ENCODE measurements at regions of chr17 and their contacts with region 1.

Region 1: GRCh38 chr17:700504-701094 is 14.0 kb downstream of the VPS53 start:
- DNase-seq: no peak
- ATAC-seq: peak in 2 of 4 donors; percentile 38 to 57
- H3K4me3 ChIP-seq: no peak overlapping the region
- H3K27ac ChIP-seq: no peak overlapping the region
- H3K4me1 ChIP-seq: peaks cover 0 to 25% (median 3%) of the 10 kb centered on the region in 12 donors
- H3K27me3 ChIP-seq: no peaks in the 10 kb centered on the region
- CTCF ChIP-seq: peak; percentile 61 to 86 (median 78)
- POLR2A ChIP-seq: no peak

Region 2: GRCh38 chr17:409848-410545 is 290.6 kb before region 1 on chr17:
- intact Hi-C with region 1: loop called (anchors 1 to 5 kb)
- DNase-seq: peak; percentile 99 to 100 (median 100)
- ATAC-seq: peak; percentile 92 to 97 (median 92)
- H3K4me3 ChIP-seq: peak overlapping the region; percentile 65 to 100 (median 82)
- H3K27ac ChIP-seq: peak overlapping the region; percentile 19 to 92 (median 76)
- H3K4me1 ChIP-seq: peaks cover 0 to 34% (median 15%) of the 10 kb centered on the region in 12 donors
- H3K27me3 ChIP-seq: no peaks in the 10 kb centered on the region
- CTCF ChIP-seq: no peak
- POLR2A ChIP-seq: peak in 1 of 2 donors; percentile 52